Activated T-helper 1 cell treated with anti-CD3 and anti-CD28 coated beads, Interleukin-12 subunit alpha, Interleukin-12 subunit beta, Interleukin-2, Interleukin-4 antibody, amounts not matched to agents 30 ng/mL and 10 ng/mL and 1 ng/mL, durations not matched to agents 14 hours and 24 hours and 36 hours (primary cell): ENCODE measurements at regions of chr14 and their contacts with region 1.

Region 1: DNA sequence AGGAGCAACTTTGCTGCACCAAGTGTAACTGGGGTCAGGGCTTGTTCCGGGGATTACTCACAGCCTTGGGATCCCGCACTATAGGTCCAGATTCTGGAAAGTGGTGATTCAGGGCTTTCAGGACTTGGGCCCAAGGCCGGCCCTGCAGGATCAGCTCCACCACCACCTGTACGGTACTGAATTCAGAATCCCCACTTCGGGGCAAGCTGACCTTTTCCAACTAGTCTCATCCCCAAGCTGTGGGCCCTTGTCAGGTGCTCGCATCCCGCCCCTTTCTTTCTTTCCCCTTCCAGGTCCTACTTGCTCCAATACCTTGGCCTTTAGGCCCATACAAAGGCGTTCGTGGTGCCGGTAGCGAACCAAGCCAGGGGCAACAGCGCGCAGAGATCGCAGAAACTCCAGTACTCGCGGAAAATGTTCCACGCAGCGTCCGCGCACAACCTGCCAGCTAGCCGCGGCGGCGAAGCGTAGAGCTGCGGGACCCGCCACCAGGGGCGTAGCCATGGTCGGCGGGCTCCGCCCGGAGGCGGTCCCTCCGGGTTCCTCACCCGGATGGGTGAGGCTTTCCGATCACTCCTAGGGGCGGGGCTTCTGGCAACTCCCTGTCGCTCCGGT is 487 bp downstream of the TINF2 start:
- DNase-seq: peak; percentile 93
- H3K4me3 Mint-ChIP-seq: peak overlapping the region; percentile 96
- H3K27ac Mint-ChIP-seq: peak overlapping the region; percentile 99
- H3K4me1 Mint-ChIP-seq: peaks cover 58% of the 10 kb centered on the region
- H3K27me3 Mint-ChIP-seq: no peaks in the 10 kb centered on the region

Region 2: GRCh38 chr14:24171422-24172260 is 70.3 kb before region 1 on chr14 and contains the start of gene REC8:
- intact Hi-C with region 1: no loop called
- DNase-seq: no peak
- H3K4me3 Mint-ChIP-seq: peak within 1 kb of the TSS; percentile 65
- H3K27ac Mint-ChIP-seq: peak within 1 kb of the TSS; percentile 55
- H3K4me1 Mint-ChIP-seq: peaks cover 24% of the 10 kb centered on the region
- H3K27me3 Mint-ChIP-seq: no peaks in the 10 kb centered on the region
- total RNA-seq, gene REC8: 27.8 and 28.9 TPM in 2 replicates

Region 3: DNA sequence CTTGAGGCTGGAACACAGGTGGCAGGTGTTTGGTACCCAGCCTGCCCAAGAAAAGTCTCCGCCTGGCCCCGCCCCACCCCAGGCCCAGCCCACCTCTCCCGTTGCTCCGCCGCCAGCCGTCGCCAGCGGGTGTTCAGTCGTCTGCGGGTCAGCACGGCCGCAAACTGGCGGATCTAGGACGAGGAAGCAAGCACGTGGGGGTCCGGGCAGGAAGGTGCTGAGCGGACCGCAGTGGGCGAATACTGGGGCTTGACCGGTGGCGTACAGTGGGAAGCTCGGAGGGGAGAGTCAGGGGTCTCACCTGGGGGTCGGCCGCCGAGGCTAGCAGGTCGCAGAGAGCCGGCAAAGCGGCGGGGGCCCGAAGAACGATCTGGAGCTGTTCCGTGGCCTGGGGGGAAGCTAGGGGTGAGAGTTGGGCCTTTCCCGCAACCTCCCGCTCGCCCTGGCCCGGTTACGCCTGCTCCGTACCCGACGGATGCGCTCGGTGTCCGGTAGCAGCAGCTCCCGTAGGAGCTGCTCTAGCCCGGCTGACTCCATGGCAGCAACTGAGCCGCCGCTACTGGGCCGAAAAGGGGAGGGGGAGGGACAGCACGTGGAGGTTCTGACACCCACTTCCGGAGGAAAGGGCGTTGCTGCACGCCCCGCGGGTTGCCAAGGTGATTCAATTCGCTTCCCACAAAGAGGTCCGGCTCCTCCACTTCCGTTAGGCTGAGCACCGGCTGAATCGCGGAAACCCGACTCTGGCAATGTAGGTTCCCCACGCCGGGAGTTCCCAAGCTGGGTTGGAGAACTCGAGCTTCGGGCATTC is 53.5 kb before region 1 on chr14 and contains the start of gene IPO4:
- intact Hi-C with region 1: loop called (anchors 2 kb)
- DNase-seq: peak; percentile 93
- H3K4me3 Mint-ChIP-seq: peak within 1 kb of the TSS; percentile 91
- H3K27ac Mint-ChIP-seq: peak within 1 kb of the TSS; percentile 86
- H3K4me1 Mint-ChIP-seq: peaks cover 42% of the 10 kb centered on the region
- H3K27me3 Mint-ChIP-seq: no peaks in the 10 kb centered on the region
- total RNA-seq, gene IPO4: 106 and 107 TPM in 2 replicates

Region 4: DNA sequence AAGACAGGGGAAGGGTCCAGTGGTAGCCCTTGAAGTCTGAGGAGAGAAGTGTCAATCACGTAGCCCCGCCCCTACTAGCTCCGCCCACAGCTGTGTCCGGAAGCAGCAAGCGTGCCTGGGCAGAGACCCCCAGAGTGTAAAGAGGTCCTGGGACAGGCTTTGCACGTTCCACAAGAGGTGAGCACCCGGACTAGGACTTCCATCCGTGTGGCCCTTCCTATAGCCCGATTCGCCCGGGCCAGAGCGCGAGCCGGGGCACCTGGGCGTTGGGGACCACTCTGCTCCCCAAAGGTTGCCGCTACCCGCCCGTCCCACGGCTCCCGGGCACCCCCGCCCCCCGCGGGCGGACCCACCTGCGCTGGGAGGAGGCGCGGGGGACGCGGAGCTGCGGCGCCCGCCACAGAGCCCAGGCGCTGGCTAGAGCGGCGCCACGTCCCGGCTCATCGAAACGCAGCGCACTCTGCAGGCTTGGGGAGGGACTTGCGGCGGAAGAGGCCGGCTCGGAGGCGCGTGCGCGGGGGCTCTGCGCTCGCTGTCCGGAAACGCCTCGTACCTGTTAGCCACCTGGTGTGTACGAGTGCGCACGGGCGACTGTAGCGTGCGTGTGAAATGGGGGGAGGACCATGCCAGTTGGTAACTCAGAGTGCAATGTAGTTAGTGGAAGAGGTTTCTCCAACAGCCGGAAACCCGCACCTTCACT is 29.3 kb after region 1 on chr14 and contains the start of gene RABGGTA:
- intact Hi-C with region 1: loop called (anchors 1 kb)
- DNase-seq: peak; percentile 87
- H3K4me3 Mint-ChIP-seq: peak within 1 kb of the TSS; percentile 93
- H3K27ac Mint-ChIP-seq: peak within 1 kb of the TSS; percentile 96
- H3K4me1 Mint-ChIP-seq: peaks cover 52% of the 10 kb centered on the region
- H3K27me3 Mint-ChIP-seq: no peaks in the 10 kb centered on the region
- total RNA-seq, gene RABGGTA: 52.2 and 54.4 TPM in 2 replicates

Region 5: GRCh38 chr14:24299255-24300195 is 57.6 kb after region 1 on chr14 and contains the starts of genes DHRS1 and NOP9:
- intact Hi-C with region 1: loop called (anchors 1 kb)
- DNase-seq: peak; percentile 90
- H3K4me3 Mint-ChIP-seq: peak within 1 kb of the TSS; percentile 94
- H3K27ac Mint-ChIP-seq: peak within 1 kb of the TSS; percentile 96
- H3K4me1 Mint-ChIP-seq: peaks cover 44% of the 10 kb centered on the region
- H3K27me3 Mint-ChIP-seq: no peaks in the 10 kb centered on the region
- total RNA-seq, gene DHRS1: 7.5 TPM in 2 replicates
- total RNA-seq, gene NOP9: 49.3 and 52.6 TPM in 2 replicates

Region 6: GRCh38 chr14:24332268-24332993 is 90.5 kb after region 1 on chr14:
- intact Hi-C with region 1: loop called (anchors 1 kb)
- DNase-seq: peak; percentile 79
- H3K4me3 Mint-ChIP-seq: peak overlapping the region; percentile 80
- H3K27ac Mint-ChIP-seq: peak overlapping the region; percentile 27
- H3K4me1 Mint-ChIP-seq: peaks cover 58% of the 10 kb centered on the region
- H3K27me3 Mint-ChIP-seq: peaks cover 29% of the 10 kb centered on the region

Region 7: GRCh38 chr14:24565766-24566165 is 323.8 kb after region 1 on chr14:
- intact Hi-C with region 1: no loop called
- DNase-seq: no peak
- H3K4me3 Mint-ChIP-seq: no peak overlapping the region
- H3K27ac Mint-ChIP-seq: no peak overlapping the region
- H3K4me1 Mint-ChIP-seq: no peaks in the 10 kb centered on the region
- H3K27me3 Mint-ChIP-seq: peaks cover 2% of the 10 kb centered on the region